ENCODE measurements at regions of chr7 and their contacts with region 1.

Region 1: GRCh38 chr7:2851497-2851896 is 7.4 kb upstream of the GNA12 start:
- DNase-seq: no peak
- H3K4me3 ChIP-seq: no peak overlapping the region
- H3K27ac ChIP-seq: no peak overlapping the region
- H3K27me3 ChIP-seq: no peaks in the 10 kb centered on the region
- CTCF ChIP-seq: no peak

Region 2: DNA sequence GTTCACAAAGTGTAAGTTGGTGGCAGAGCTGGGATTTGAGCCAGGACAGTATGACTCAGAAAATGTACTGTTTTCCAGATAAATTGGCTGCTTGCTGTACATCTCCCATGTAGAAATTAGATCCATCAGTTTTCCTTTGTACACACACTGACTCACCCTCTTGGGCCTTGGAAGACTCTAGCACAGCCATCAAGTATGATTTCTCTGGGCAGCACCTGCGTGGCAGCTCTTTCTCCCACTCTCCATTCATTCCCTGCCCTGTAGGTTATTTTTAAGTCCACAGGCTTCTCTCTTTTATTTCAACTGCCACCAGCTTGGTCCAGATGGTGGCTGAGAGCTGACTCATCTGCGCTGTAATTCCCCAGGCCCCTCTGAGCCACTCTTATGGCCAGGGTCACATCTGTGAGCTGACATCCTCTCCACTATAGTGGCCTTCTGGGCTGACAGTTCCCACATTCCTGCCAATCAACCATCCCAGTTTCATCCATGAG is 421.2 kb after region 1 on chr7:
- intact Hi-C with region 1: no loop called
- DNase-seq: peak in 1 of 10 donors; percentile 6
- H3K4me3 ChIP-seq: no peak overlapping the region
- H3K27ac ChIP-seq: no peak overlapping the region
- H3K27me3 ChIP-seq: no peaks in the 10 kb centered on the region
- CTCF ChIP-seq: no peak

Region 3: DNA sequence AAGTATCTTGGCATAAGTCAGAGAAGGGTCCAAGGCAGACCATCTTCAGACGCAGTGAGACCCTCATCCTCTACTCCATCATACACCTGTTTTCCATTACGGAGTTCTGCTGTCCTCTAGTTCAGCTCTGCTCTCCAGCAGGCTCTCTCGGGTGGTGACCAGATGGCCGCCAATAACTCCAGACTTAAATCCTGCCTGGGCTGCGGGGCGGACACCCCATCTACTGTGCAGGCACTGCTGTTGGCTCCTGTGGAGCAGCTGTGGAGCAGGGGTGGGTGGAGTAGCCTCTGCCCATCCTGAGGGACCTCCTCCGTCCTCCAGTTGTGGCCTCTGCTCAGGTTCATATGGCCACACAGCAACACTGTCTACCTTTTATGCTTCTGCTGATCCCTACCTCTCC is 1057.6 kb after region 1 on chr7:
- intact Hi-C with region 1: loop called in 1 of 2 experiments (anchors 10 kb)
- DNase-seq: no peak
- H3K4me3 ChIP-seq: peak overlapping the region in 1 of 59 donors; percentile 7
- H3K27ac ChIP-seq: peak overlapping the region in 25 of 59 donors; percentile 65 to 96 (median 85)
- H3K27me3 ChIP-seq: no peaks in the 10 kb centered on the region
- CTCF ChIP-seq: no peak